Heart right ventricle (tissue), 16 donors: ENCODE measurements at regions of chr1 and their contacts with region 1.

Region 1: DNA sequence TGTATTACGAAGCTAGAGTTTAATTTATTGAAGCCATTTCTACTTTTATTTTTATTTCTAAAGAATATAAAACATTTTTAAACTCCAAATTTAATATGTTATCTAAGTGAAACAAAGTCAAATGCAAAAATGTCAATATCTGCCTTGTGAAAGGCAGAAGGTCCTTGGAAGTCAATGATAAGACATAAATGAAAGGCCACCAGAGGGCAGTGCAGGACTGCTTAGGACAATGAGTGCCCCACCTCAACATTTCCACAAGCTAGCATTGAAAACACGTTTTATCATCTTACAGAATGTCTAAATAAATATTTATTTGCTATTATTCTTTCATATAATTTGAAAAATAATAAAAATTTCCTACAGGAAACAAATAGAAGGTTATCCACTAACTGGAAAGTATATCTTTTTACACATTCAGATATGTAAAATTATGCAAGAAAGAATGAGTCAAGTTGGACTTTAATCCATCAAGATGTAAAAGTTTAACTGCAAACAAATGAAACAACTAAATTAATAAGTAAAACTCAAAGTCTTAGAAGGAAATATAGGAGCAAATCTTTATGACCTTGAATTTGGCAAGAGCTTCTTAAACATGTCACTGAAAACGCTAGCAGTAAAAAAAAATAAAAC is 140.1 kb upstream of the FMN2 start:
- DNase-seq: peak in 1 of 2 donors; percentile 55
- ATAC-seq: no peak
- H3K4me3 ChIP-seq: no peak overlapping the region
- H3K27ac ChIP-seq: no peak overlapping the region
- H3K4me1 ChIP-seq: no peaks in the 10 kb centered on the region
- H3K27me3 ChIP-seq: peaks cover 0 to 35% (median 7%) of the 10 kb centered on the region in 7 donors
- CTCF ChIP-seq: peak; percentile 58 to 88 (median 79)

Region 2: GRCh38 chr1:239976130-239976968 is 24.7 kb after region 1 on chr1:
- intact Hi-C with region 1: loop called in 3 of 10 experiments (anchors 1 to 5 kb)
- DNase-seq: peak; percentile 10 to 27
- ATAC-seq: no peak
- H3K4me3 ChIP-seq: no peak overlapping the region
- H3K27ac ChIP-seq: no peak overlapping the region
- H3K4me1 ChIP-seq: no peaks in the 10 kb centered on the region
- H3K27me3 ChIP-seq: peaks cover 0 to 15% (median 2%) of the 10 kb centered on the region in 7 donors
- CTCF ChIP-seq: peak; percentile 80 to 98 (median 89)

Region 3: GRCh38 chr1:239987103-239987745 is 35.6 kb after region 1 on chr1:
- intact Hi-C with region 1: loop called in 2 of 10 experiments (anchors 5 kb)
- DNase-seq: no peak
- ATAC-seq: no peak
- H3K4me3 ChIP-seq: no peak overlapping the region
- H3K27ac ChIP-seq: no peak overlapping the region
- H3K4me1 ChIP-seq: no peaks in the 10 kb centered on the region
- H3K27me3 ChIP-seq: peaks cover 0 to 13% (median 0%) of the 10 kb centered on the region in 7 donors
- CTCF ChIP-seq: peak; percentile 29 to 82 (median 68)

Region 4: DNA sequence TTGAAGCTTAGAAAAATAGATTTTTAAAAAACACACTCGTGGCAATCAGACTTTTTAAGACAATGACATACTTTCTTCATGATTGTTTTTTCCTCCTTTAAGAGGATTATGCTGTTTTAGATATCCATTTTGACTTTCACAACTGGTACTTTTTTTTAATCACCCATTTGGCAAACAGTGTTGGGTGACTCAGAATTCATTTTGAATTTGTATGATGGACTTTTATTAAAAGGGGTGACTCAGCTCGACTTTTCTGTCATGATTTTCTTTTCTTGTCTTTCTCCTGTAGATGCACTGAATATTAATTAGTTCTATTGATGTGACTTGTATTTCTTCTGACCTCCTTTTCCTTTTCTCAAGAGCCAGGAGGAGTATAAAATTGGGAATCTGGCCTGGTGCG is 184.8 kb after region 1 on chr1:
- intact Hi-C with region 1: no loop called
- DNase-seq: no peak
- ATAC-seq: no peak
- H3K4me3 ChIP-seq: no peak overlapping the region
- H3K27ac ChIP-seq: no peak overlapping the region
- H3K4me1 ChIP-seq: no peaks in the 10 kb centered on the region
- H3K27me3 ChIP-seq: peaks cover 0 to 24% (median 10%) of the 10 kb centered on the region in 7 donors
- CTCF ChIP-seq: no peak